ENCODE measurements at regions of chr18 and their contacts with region 1.

Region 1: GRCh38 chr18:35616664-35617423 is 35.3 kb downstream of the GALNT1 start:
- DNase-seq: peak; percentile 78
- ATAC-seq: peak; percentile 94
- H3K4me3 Mint-ChIP-seq: no peak overlapping the region
- H3K27ac Mint-ChIP-seq: no peak overlapping the region
- H3K4me1 Mint-ChIP-seq: peaks cover 8% of the 10 kb centered on the region
- H3K27me3 Mint-ChIP-seq: no peaks in the 10 kb centered on the region

Region 2: GRCh38 chr18:35497370-35498197 is 119.3 kb before region 1 on chr18 and contains the start of gene INO80C:
- CTCF ChIA-PET with region 1: interaction called, 3 read pairs
- POLR2A ChIA-PET with region 1: interaction called, 14 read pairs
- DNase-seq: peak; percentile 93
- ATAC-seq: peak; percentile 98
- H3K4me3 Mint-ChIP-seq: peak within 1 kb of the TSS; percentile 99
- H3K27ac Mint-ChIP-seq: peak within 1 kb of the TSS; percentile 100
- H3K4me1 Mint-ChIP-seq: peaks cover 25% of the 10 kb centered on the region
- H3K27me3 Mint-ChIP-seq: no peaks in the 10 kb centered on the region
- total RNA-seq, gene INO80C: 12.9 to 19.4 TPM

Region 3: GRCh38 chr18:35581898-35582641 is 34.8 kb before region 1 on chr18:
- CTCF ChIA-PET with region 1: interaction called, 3 read pairs
- POLR2A ChIA-PET with region 1: interaction called, 13 read pairs
- DNase-seq: peak; percentile 38
- ATAC-seq: peak; percentile 13
- H3K4me3 Mint-ChIP-seq: peak overlapping the region; percentile 70
- H3K27ac Mint-ChIP-seq: peak overlapping the region; percentile 60
- H3K4me1 Mint-ChIP-seq: peaks cover 21% of the 10 kb centered on the region
- H3K27me3 Mint-ChIP-seq: peaks cover 17% of the 10 kb centered on the region

Region 4: DNA sequence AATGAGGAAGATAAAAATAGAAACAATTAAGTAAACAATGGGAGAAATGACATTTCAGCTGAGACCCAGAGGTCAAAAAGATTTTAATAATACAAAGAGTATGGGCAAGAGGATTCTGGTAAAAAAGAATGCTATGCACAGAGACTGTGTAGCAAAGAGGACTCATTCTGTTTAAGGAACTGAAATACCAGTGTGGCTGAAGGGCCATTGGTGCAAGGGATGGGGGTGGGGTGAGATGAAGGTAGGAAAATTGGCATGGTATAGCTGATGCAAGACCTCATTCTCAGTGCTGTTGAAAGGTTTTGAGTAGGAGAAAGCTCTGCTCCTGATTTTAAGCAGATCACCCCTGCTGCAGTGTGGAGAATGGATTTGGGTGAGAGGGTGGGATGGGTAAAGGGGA is 24.5 kb before region 1 on chr18:
- CTCF ChIA-PET with region 1: no interaction called
- POLR2A ChIA-PET with region 1: no interaction called
- DNase-seq: no peak
- ATAC-seq: no peak
- H3K4me3 Mint-ChIP-seq: no peak overlapping the region
- H3K27ac Mint-ChIP-seq: no peak overlapping the region
- H3K4me1 Mint-ChIP-seq: peaks cover 5% of the 10 kb centered on the region
- H3K27me3 Mint-ChIP-seq: no peaks in the 10 kb centered on the region

Measured in activated CD8-positive, alpha-beta T cell treated with anti-CD3 and anti-CD28 coated beads, Interleukin-2, amount 10 ng/mL, durations not matched to agents 7 days and 5 days (primary cell).